Activated T-helper 2 cell treated with anti-CD3 and anti-CD28 coated beads, Interferon-gamma antibody, Interleukin-2, Interleukin-4, amounts not matched to agents 10 μg/mL and 5 μg/mL and 100 μg/mL, durations not matched to agents 14 hours and 24 hours and 36 hours (primary cell): ENCODE measurements at regions of chr5 and their contacts with region 1.

Region 1: DNA sequence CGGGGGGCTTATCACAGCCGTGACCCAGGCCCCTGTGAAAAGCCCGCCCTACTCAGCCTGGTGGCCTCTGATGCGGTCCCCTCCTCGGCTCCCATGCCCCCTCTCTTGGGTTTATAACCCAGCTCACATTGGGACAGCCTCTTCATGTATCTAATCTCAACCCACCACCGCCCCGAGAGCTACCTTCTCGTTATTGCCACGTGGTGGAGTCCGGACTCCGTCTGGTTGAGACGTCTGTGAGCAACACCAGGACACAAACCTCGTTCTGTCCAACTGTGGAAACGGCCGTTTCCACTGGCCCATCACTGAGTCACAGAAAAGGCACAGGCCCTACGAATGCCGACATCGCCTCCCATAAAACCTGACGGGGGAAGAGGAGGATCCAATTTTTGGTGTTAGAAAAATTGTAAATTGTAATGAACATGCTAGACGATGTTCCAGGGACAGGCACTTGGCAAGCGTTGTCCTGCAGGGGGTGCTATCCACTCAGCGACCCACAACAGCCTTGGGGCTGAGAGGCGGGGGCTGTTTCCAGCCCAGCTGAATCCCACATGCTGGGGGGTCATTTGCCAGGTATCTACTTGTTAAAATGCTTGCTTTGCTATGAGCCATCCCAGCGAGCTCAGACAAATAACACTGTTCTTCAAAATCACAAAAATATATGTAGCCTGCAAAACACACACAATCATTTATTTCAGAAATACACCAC is 37.3 kb upstream of the N4BP3 start:
- DNase-seq: peak; percentile 64
- H3K4me3 Mint-ChIP-seq: peak overlapping the region; percentile 67
- H3K27ac Mint-ChIP-seq: no peak overlapping the region
- H3K4me1 Mint-ChIP-seq: peaks cover 8% of the 10 kb centered on the region
- H3K27me3 Mint-ChIP-seq: peaks cover 2% of the 10 kb centered on the region

Region 2: GRCh38 chr5:178163772-178164735 is 88.1 kb after region 1 on chr5:
- intact Hi-C with region 1: loop called (anchors 1 kb)
- DNase-seq: peak; percentile 83
- H3K4me3 Mint-ChIP-seq: peak overlapping the region; percentile 16
- H3K27ac Mint-ChIP-seq: no peak overlapping the region
- H3K4me1 Mint-ChIP-seq: peaks cover 8% of the 10 kb centered on the region
- H3K27me3 Mint-ChIP-seq: peaks cover 29% of the 10 kb centered on the region

Region 3: DNA sequence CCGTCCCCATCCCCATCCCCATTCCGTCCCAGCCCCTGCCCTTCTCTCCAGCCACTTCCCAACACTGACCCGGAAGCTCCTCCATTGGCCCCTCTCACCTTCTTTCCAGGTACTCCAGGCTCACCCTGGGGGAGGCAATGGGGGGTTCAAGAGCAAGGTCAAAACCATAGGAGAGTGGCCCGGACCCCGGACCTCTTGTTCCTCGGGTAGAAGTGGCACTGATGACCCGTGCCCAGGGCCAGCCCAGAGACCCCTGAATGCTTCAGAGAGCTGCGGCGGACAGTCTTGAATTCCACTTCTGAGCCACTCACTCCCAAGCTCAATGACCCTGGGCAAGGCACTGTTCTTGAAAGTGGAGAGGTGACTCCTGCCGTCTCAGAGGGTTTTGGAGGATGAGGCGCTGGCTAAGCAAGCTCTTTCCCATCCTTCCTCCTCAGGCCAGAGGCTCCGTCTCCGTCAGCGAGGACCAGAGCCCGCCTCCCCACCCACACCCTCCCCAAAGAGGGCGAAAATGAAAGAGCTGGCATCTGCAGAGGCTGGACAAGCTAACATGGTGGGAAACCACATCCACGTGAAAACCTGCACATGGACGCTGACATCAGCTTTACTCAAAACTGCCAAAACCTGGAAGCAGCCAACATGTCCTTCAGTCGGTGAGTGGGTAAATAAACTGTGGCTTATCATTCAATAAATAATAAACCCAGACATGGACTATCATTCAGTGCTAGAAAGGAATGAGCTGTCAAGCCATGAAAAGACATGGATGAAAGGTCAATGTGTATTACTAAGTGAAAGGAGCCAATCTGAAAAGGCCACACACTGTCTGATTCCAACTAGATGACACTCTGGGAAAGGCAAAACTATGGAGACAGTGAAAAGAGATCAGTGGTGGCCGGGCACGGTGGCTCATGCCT is 183.9 kb after region 1 on chr5:
- intact Hi-C with region 1: no loop called
- DNase-seq: no peak
- H3K4me3 Mint-ChIP-seq: no peak overlapping the region
- H3K27ac Mint-ChIP-seq: no peak overlapping the region
- H3K4me1 Mint-ChIP-seq: no peaks in the 10 kb centered on the region
- H3K27me3 Mint-ChIP-seq: no peaks in the 10 kb centered on the region

Region 4: DNA sequence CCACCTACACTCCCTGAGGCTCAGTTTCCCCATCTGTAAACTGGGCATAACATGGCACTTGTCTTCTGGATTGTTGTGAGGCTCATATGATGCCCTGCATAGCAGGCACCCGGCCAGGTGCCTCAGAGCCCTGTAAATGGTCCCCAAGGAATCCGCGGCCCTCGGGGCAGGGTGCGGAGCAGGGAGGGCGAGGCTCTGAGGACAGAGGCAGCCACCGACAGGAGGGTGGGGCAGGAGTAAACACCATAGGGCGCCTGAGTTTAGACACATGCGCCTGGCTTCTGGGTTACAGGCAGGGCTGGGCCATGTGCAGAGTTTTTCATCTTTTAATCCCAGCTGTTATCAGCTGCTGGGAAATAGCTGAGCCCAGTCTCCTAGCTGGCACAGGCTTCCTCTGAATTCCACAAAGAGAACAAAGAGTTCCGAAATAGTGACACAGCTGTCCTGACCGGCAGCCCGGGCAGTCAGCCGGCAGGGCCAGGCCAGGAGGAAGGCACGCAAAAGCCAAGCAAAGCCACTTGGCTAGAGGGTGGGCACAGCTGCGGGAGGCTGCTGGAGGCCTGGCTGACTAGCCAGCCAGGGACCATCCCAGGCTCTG is 255.5 kb after region 1 on chr5:
- intact Hi-C with region 1: no loop called
- DNase-seq: no peak
- H3K4me3 Mint-ChIP-seq: no peak overlapping the region
- H3K27ac Mint-ChIP-seq: no peak overlapping the region
- H3K4me1 Mint-ChIP-seq: peaks cover 3% of the 10 kb centered on the region
- H3K27me3 Mint-ChIP-seq: no peaks in the 10 kb centered on the region